B cell (primary cell): ENCODE measurements at regions of chr2 and their contacts with region 1.

Region 1: GRCh38 chr2:59025157-59025757 is 784.1 kb upstream of the FANCL start:
- DNase-seq: peak; percentile 71
- ATAC-seq: peak; percentile 66
- H3K4me3 ChIP-seq: no peak overlapping the region
- H3K4me3 Mint-ChIP-seq: peak overlapping the region; percentile 28
- H3K27ac ChIP-seq: no peak overlapping the region
- H3K27ac Mint-ChIP-seq: no peak overlapping the region
- H3K4me1 ChIP-seq: peaks cover 0 to 3% of the 10 kb centered on the region in 2 donors
- H3K4me1 Mint-ChIP-seq: peaks cover 2% of the 10 kb centered on the region
- H3K27me3 ChIP-seq: peaks cover 0 to 2% (median 0%) of the 10 kb centered on the region in 4 experiments
- H3K27me3 Mint-ChIP-seq: peaks cover 17% of the 10 kb centered on the region
- CTCF ChIP-seq: peak; percentile 86

Region 2: DNA sequence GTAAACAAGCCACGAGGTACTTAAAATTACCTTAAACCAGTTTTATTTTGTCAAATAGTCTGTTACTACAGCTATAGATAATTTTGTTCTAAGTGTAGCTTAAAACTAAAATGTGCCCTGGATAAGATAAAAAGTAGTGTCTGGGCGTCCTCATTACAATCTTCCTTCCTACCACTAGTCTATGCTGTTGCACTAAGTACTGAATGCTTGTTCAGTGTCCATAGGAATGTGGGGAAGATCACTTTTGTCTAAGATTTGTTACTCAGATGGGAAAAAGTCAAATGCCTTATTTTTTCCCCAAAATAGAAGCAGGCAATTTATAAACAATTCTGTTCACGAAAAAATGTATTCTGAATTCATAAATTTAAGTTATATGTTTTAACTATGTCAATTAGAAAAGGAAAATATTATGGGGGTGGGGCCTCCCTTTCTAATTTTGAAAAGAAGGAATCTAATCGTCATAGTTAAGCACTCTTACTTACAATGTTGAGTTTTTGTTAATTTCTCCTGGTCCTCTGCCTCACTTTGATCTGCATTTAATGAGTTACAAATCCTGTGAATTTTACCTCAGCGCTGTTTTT is 1119.0 kb before region 1 on chr2:
- CTCF ChIA-PET with region 1: interaction called, 3 read pairs
- POLR2A ChIA-PET with region 1: no interaction called
- intact Hi-C with region 1: loop called (anchors 10 kb)
- DNase-seq: peak; percentile 64
- ATAC-seq: peak; percentile 65
- H3K4me3 ChIP-seq: no peak overlapping the region
- H3K4me3 Mint-ChIP-seq: no peak overlapping the region
- H3K27ac ChIP-seq: no peak overlapping the region
- H3K27ac Mint-ChIP-seq: peak overlapping the region; percentile 1
- H3K4me1 ChIP-seq: peaks cover 14 to 32% of the 10 kb centered on the region in 2 donors
- H3K4me1 Mint-ChIP-seq: peaks cover 34% of the 10 kb centered on the region
- H3K27me3 ChIP-seq: no peaks in the 10 kb centered on the region
- H3K27me3 Mint-ChIP-seq: no peaks in the 10 kb centered on the region
- CTCF ChIP-seq: peak; percentile 84

Region 3: DNA sequence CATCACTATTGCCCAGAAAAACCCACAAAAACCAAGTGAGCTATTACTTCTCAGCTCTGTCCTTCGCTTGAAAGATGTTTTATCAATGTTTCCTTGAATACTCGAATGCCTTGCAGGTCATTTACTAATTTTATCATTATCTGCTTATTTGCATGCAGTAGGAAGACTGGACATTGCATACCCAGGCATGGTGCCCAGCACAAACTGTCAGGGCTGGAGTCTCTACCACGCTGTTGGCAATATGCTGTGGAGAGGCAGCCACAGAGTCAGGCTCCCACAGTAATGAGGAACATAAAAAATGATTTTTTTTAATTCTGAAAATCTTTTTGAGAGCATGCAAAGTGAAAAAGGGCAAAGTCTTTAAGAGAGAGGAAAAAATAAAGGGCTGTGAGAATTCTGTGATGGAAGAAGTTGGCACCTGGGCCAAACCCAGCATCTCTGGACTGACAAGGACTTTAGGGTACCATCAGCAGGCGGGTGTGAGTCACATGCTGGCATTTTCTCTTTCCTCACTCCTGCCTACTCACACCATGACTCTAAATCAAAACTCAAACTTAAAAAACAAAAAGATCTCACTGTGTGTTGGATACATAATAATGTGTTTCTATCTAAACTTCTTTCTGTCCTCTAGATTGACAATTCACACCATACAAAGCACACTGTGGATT is 74.3 kb before region 1 on chr2:
- CTCF ChIA-PET with region 1: no interaction called
- POLR2A ChIA-PET with region 1: no interaction called
- intact Hi-C with region 1: no loop called
- DNase-seq: no peak
- ATAC-seq: no peak
- H3K4me3 ChIP-seq: no peak overlapping the region
- H3K4me3 Mint-ChIP-seq: no peak overlapping the region
- H3K27ac ChIP-seq: no peak overlapping the region
- H3K27ac Mint-ChIP-seq: no peak overlapping the region
- H3K4me1 ChIP-seq: no peaks in the 10 kb centered on the region
- H3K4me1 Mint-ChIP-seq: no peaks in the 10 kb centered on the region
- H3K27me3 ChIP-seq: no peaks in the 10 kb centered on the region
- H3K27me3 Mint-ChIP-seq: peaks cover 10% of the 10 kb centered on the region
- CTCF ChIP-seq: no peak

Region 4: DNA sequence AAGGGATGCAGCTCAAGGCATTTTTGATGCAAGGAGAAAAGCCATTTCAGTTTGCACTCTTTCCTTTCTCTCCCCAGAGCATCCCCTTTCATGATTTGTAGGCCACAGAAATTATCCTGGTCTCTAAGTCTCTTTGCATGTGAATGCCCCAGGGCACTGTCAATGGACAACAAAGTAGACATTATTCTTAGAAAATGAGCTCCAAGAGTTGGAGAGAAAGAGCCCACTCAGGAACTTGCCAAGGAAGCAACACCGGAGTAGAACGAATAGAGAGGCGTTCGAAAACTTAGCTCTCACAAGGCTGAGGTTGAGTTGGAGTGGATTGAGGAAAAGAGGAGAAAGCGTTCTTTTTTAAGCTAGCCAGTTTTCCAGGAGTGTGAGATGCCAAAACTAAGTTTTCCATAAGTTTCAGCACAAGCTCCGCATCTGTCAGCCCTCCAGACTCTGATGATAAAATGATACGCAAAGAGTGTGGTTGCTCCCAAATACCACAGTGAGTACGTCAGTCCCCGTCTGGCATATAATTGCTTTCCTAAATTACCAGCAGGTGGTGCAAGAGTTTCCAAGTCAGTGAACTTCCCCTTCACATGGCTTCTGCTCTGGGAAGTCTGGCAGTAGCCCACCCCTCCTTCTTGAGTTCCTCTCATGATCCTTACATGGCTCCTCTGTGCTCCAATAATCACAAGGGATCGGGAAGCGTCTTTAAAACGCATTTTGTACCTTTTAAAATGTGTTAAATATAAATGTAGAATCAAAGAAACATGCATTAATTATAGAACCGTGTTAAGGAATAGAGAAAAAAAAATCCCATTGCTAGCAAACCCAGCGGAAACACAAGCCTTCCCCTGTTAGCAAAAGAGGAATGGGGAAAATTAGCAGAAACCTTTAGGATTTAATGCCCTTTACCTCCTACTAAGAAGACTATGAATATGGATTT is 276.5 kb after region 1 on chr2:
- CTCF ChIA-PET with region 1: interaction called, 14 read pairs
- POLR2A ChIA-PET with region 1: no interaction called
- intact Hi-C with region 1: loop called (anchors 5 kb)
- DNase-seq: peak; percentile 80
- ATAC-seq: peak; percentile 91
- H3K4me3 ChIP-seq: no peak overlapping the region
- H3K4me3 Mint-ChIP-seq: no peak overlapping the region
- H3K27ac ChIP-seq: no peak overlapping the region
- H3K27ac Mint-ChIP-seq: no peak overlapping the region
- H3K4me1 ChIP-seq: no peaks in the 10 kb centered on the region
- H3K4me1 Mint-ChIP-seq: no peaks in the 10 kb centered on the region
- H3K27me3 ChIP-seq: no peaks in the 10 kb centered on the region
- H3K27me3 Mint-ChIP-seq: peaks cover 4% of the 10 kb centered on the region
- CTCF ChIP-seq: peak; percentile 74

Region 5: DNA sequence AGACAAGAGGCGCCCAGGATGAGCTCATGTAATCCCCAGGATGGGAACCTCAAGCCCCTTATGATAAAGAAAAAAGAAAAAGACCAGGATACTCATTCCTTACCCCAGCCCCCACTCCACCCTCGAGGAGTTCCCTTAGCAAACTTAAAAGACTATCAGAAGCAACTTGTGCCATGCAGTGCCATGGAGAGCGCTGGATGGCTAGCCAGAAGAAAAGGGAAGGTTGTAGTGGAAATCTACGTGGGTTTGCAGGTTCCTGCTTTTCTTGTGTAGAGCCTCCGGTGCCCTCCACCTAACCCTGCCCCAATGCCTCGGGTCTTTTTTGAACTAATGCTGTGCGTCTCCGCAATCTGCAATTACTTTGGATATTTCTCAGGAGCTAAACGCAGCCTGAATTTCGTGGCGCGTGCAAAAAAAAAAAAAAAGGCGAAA is 1544.4 kb after region 1 on chr2:
- CTCF ChIA-PET with region 1: interaction called, 142 read pairs
- POLR2A ChIA-PET with region 1: no interaction called
- intact Hi-C with region 1: loop called (anchors 1 kb)
- DNase-seq: peak; percentile 54
- ATAC-seq: peak; percentile 57
- H3K4me3 ChIP-seq: peak overlapping the region; percentile 42 to 77 (median 67)
- H3K4me3 Mint-ChIP-seq: no peak overlapping the region
- H3K27ac ChIP-seq: peak overlapping the region in 1 of 2 donors; percentile 18
- H3K27ac Mint-ChIP-seq: no peak overlapping the region
- H3K4me1 ChIP-seq: peaks cover 20 to 31% of the 10 kb centered on the region in 2 donors
- H3K4me1 Mint-ChIP-seq: peaks cover 13% of the 10 kb centered on the region
- H3K27me3 ChIP-seq: peaks cover 0 to 24% (median 21%) of the 10 kb centered on the region in 4 experiments
- H3K27me3 Mint-ChIP-seq: peaks cover 16% of the 10 kb centered on the region
- CTCF ChIP-seq: no peak

Region 6: DNA sequence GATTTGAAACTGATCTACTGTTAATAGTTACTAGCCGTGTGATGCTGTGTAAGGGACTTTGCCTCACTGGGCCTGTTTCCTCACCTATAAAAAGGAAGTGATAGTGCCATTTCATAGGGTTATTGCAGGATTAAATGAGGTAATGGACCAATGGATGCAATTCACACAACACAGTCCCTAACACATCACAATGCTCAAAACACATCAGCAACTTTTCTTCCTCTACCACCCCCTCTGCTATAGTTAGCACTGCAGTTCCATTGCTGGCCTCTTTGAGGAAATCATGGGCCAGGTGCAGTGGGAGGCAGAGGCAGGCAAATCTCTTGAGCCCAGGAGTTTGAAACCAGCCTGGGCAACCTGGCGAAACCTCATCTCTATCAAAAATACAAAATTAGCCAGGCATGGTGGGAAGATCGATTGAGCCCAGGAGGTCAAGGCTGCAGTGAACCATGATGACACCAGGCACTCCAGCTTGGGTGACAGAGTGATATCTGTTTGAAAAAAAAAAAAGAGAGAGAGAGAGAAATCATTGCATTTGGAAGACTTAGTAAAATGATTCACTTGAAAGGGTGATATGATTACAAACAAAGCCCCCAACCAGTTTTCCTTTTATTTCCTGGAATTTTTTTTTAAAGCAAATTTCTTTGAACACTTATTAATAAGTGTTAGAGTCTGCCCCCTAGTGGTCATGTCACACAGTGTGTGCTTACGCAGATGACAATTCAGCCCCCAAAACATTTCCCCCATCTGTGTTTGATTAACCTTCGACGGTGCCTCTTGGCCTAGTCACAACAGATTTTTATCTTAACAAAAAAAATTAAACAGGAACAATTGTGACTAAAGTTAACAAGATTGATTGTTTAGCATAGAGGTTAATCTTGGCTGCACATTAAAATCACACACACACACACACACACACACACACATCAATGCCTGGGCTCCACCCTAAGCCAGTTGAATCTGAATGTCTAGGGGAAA is 1616.8 kb after region 1 on chr2:
- CTCF ChIA-PET with region 1: interaction called, 25 read pairs
- POLR2A ChIA-PET with region 1: no interaction called
- intact Hi-C with region 1: loop called (anchors 10 kb)
- DNase-seq: peak; percentile 67
- ATAC-seq: peak; percentile 58
- H3K4me3 ChIP-seq: no peak overlapping the region
- H3K4me3 Mint-ChIP-seq: no peak overlapping the region
- H3K27ac ChIP-seq: no peak overlapping the region
- H3K27ac Mint-ChIP-seq: no peak overlapping the region
- H3K4me1 ChIP-seq: peaks cover 15 to 16% of the 10 kb centered on the region in 2 donors
- H3K4me1 Mint-ChIP-seq: peaks cover 22% of the 10 kb centered on the region
- H3K27me3 ChIP-seq: no peaks in the 10 kb centered on the region
- H3K27me3 Mint-ChIP-seq: peaks cover 3% of the 10 kb centered on the region
- CTCF ChIP-seq: peak; percentile 86